PC-9 (cell line): ENCODE measurements at regions of chr5 and their contacts with region 1.

Region 1: GRCh38 chr5:149540089-149540488 is 11.2 kb downstream of the CSNK1A1 start:
- DNase-seq: no peak
- H3K4me3 ChIP-seq: no peak overlapping the region
- H3K27ac ChIP-seq: no peak overlapping the region
- H3K4me1 ChIP-seq: peaks cover 5% of the 10 kb centered on the region
- H3K27me3 ChIP-seq: no peaks in the 10 kb centered on the region
- CTCF ChIP-seq: no peak

Region 2: GRCh38 chr5:148632255-148633066 is 907.6 kb before region 1 on chr5:
- CTCF ChIA-PET with region 1: no interaction called
- POLR2A ChIA-PET with region 1: no interaction called
- intact Hi-C with region 1: no loop called
- DNase-seq: no peak
- H3K4me3 ChIP-seq: no peak overlapping the region
- H3K27ac ChIP-seq: no peak overlapping the region
- H3K4me1 ChIP-seq: no peaks in the 10 kb centered on the region
- H3K27me3 ChIP-seq: no peaks in the 10 kb centered on the region
- CTCF ChIP-seq: no peak

Region 3: GRCh38 chr5:149011074-149011476 is 529.0 kb before region 1 on chr5:
- CTCF ChIA-PET with region 1: no interaction called
- POLR2A ChIA-PET with region 1: no interaction called
- intact Hi-C with region 1: no loop called
- DNase-seq: peak; percentile 92 to 98
- H3K4me3 ChIP-seq: no peak overlapping the region
- H3K27ac ChIP-seq: peak overlapping the region; percentile 96
- H3K4me1 ChIP-seq: peaks cover 48% of the 10 kb centered on the region
- H3K27me3 ChIP-seq: no peaks in the 10 kb centered on the region
- CTCF ChIP-seq: no peak; the same call in 1 of the 2 replicates

Region 4: DNA sequence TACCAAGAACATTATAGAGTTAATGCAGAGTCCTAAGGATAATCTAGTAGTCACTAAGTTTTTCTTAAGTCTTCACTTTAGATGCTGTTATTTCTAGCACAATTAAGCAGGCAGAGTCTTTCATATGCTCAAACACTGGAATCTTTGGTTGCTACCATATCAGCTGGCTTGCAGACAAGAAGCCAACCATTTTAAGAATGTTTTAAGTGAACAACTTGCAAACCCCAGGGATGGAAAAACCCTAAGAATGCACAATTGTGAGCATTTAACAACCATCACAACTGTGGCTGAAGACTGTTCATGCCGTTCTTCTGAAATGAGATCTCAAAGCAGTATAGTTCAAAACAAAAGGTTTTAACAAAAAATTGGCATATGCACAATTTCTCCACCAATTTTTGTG is 43.9 kb before region 1 on chr5:
- CTCF ChIA-PET with region 1: no interaction called
- POLR2A ChIA-PET with region 1: interaction called, 20 read pairs
- intact Hi-C with region 1: no loop called
- DNase-seq: no peak
- H3K4me3 ChIP-seq: no peak overlapping the region
- H3K27ac ChIP-seq: no peak overlapping the region; the same call in 1 of the 2 replicates
- H3K4me1 ChIP-seq: peaks cover 32% of the 10 kb centered on the region
- H3K27me3 ChIP-seq: no peaks in the 10 kb centered on the region
- CTCF ChIP-seq: no peak

Region 5: GRCh38 chr5:149517461-149518122 is 22.5 kb before region 1 on chr5:
- CTCF ChIA-PET with region 1: no interaction called
- POLR2A ChIA-PET with region 1: no interaction called
- intact Hi-C with region 1: no loop called
- DNase-seq: no peak
- H3K4me3 ChIP-seq: no peak overlapping the region
- H3K27ac ChIP-seq: peak overlapping the region; percentile 6; the same call in 1 of the 2 replicates
- H3K4me1 ChIP-seq: no peaks in the 10 kb centered on the region
- H3K27me3 ChIP-seq: no peaks in the 10 kb centered on the region
- CTCF ChIP-seq: no peak